ENCODE measurements at regions of chr5 and their contacts with region 1.

Region 1: GRCh38 chr5:93582677-93583438 is at the start of gene NR2F1:
- DNase-seq: peak; percentile 99
- ATAC-seq: peak; percentile 45
- H3K4me3 ChIP-seq: peak within 1 kb of the TSS; percentile 99
- H3K27ac ChIP-seq: peak within 1 kb of the TSS; percentile 97
- H3K4me1 ChIP-seq: no peaks in the 10 kb centered on the region
- H3K27me3 ChIP-seq: no peaks in the 10 kb centered on the region
- CTCF ChIP-seq: 0 out of 2 replicates have a peak, but pooled peaks have one; percentile 23
- POLR2A ChIP-seq: peak; percentile 69
- RAD21 ChIP-seq: no peak
- total RNA-seq, gene NR2F1: 18.1 and 19.0 TPM in 2 replicates

Region 2: GRCh38 chr5:92687821-92688722 is 894.8 kb before region 1 on chr5:
- CTCF ChIA-PET with region 1: no interaction called
- POLR2A ChIA-PET with region 1: no interaction called
- dilution Hi-C with region 1: no loop called
- in situ Hi-C with region 1: loop called (anchors 10 kb)
- intact Hi-C with region 1: loop called (anchors 1 kb)
- DNase-seq: peak; percentile 78
- ATAC-seq: peak; percentile 96
- H3K4me3 ChIP-seq: peak overlapping the region; percentile 1; the same call in 1 of the 2 replicates
- H3K27ac ChIP-seq: no peak overlapping the region; the same call in 1 of the 2 replicates
- H3K4me1 ChIP-seq: no peaks in the 10 kb centered on the region
- H3K27me3 ChIP-seq: no peaks in the 10 kb centered on the region
- CTCF ChIP-seq: peak; percentile 62
- POLR2A ChIP-seq: no peak
- RAD21 ChIP-seq: peak; percentile 72

Region 3: GRCh38 chr5:93058309-93058708 is 524.5 kb before region 1 on chr5:
- CTCF ChIA-PET with region 1: no interaction called
- POLR2A ChIA-PET with region 1: interaction called, 13 read pairs
- dilution Hi-C with region 1: no loop called
- in situ Hi-C with region 1: no loop called
- intact Hi-C with region 1: loop called (anchors 1 kb)
- DNase-seq: peak; percentile 92
- ATAC-seq: peak; percentile 89
- H3K4me3 ChIP-seq: no peak overlapping the region
- H3K27ac ChIP-seq: no peak overlapping the region
- H3K4me1 ChIP-seq: peaks cover 7% of the 10 kb centered on the region
- H3K27me3 ChIP-seq: no peaks in the 10 kb centered on the region
- CTCF ChIP-seq: no peak
- POLR2A ChIP-seq: no peak
- RAD21 ChIP-seq: no peak

Region 4: GRCh38 chr5:93246090-93246855 is 336.6 kb before region 1 on chr5:
- CTCF ChIA-PET with region 1: no interaction called
- POLR2A ChIA-PET with region 1: no interaction called
- dilution Hi-C with region 1: no loop called
- in situ Hi-C with region 1: no loop called
- intact Hi-C with region 1: loop called (anchors 2 kb)
- DNase-seq: peak; percentile 47
- ATAC-seq: peak; percentile 59
- H3K4me3 ChIP-seq: no peak overlapping the region
- H3K27ac ChIP-seq: peak overlapping the region; percentile 41; the same call in 1 of the 2 replicates
- H3K4me1 ChIP-seq: peaks cover 6% of the 10 kb centered on the region
- H3K27me3 ChIP-seq: no peaks in the 10 kb centered on the region
- CTCF ChIP-seq: no peak
- POLR2A ChIP-seq: no peak
- RAD21 ChIP-seq: no peak

Region 5: DNA sequence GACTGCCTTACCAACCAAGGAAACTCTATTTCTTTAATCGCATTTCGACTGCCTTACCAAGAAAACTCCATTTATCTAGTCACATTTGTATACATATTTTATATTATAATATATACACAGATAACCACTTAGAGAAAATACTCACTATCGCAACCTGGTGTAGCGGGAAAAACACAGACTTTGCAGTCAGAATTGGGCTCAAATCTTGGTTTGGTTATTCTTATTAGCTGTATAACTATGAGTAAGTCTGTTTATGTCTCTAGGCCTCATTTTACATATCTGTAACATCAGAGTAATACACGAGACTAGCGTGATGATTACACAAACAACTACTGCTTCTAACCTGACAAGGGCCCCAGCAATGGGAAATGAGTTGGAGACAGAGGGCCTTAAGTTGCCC is 286.0 kb after region 1 on chr5:
- CTCF ChIA-PET with region 1: no interaction called
- POLR2A ChIA-PET with region 1: interaction called, 19 read pairs
- dilution Hi-C with region 1: no loop called
- in situ Hi-C with region 1: no loop called
- intact Hi-C with region 1: no loop called
- DNase-seq: peak; percentile 70
- ATAC-seq: peak; percentile 35
- H3K4me3 ChIP-seq: no peak overlapping the region
- H3K27ac ChIP-seq: no peak overlapping the region
- H3K4me1 ChIP-seq: no peaks in the 10 kb centered on the region
- H3K27me3 ChIP-seq: no peaks in the 10 kb centered on the region
- CTCF ChIP-seq: no peak
- POLR2A ChIP-seq: no peak
- RAD21 ChIP-seq: no peak

Region 6: GRCh38 chr5:94693043-94693822 is 1110.4 kb after region 1 on chr5:
- CTCF ChIA-PET with region 1: no interaction called
- POLR2A ChIA-PET with region 1: no interaction called
- dilution Hi-C with region 1: no loop called
- in situ Hi-C with region 1: loop called (anchors 10 kb)
- intact Hi-C with region 1: loop called (anchors 5 kb)
- DNase-seq: peak; percentile 93
- ATAC-seq: peak; percentile 80
- H3K4me3 ChIP-seq: no peak overlapping the region
- H3K27ac ChIP-seq: no peak overlapping the region
- H3K4me1 ChIP-seq: peaks cover 4% of the 10 kb centered on the region
- H3K27me3 ChIP-seq: no peaks in the 10 kb centered on the region
- CTCF ChIP-seq: peak; percentile 49
- POLR2A ChIP-seq: no peak
- RAD21 ChIP-seq: peak; percentile 50

Measured in IMR-90 (cell line).